ENCODE measurements at regions of chr12 and their contacts with region 1.

Region 1: GRCh38 chr12:93198086-93198485 is 179.6 kb upstream of the NUDT4 start:
- DNase-seq: no peak

Region 2: GRCh38 chr12:93137656-93138612 is 60.2 kb before region 1 on chr12:
- in situ Hi-C with region 1: loop called (anchors 10 kb)
- DNase-seq: no peak

Region 3: GRCh38 chr12:93261505-93262094 is 63.5 kb after region 1 on chr12:
- in situ Hi-C with region 1: no loop called
- DNase-seq: no peak